GM23248 (cell line): ENCODE measurements at regions of chr3 and their contacts with region 1.

Region 1: GRCh38 chr3:14921078-14921616 is 26.2 kb upstream of the NR2C2 start:
- DNase-seq: peak; percentile 93
- H3K4me3 ChIP-seq: no peak overlapping the region
- H3K27ac ChIP-seq: no peak overlapping the region
- H3K4me1 ChIP-seq: peaks cover 3% of the 10 kb centered on the region; the same call in 1 of the 2 replicates
- H3K27me3 ChIP-seq: peaks cover 12% of the 10 kb centered on the region; the same call in 1 of the 2 replicates

Region 2: DNA sequence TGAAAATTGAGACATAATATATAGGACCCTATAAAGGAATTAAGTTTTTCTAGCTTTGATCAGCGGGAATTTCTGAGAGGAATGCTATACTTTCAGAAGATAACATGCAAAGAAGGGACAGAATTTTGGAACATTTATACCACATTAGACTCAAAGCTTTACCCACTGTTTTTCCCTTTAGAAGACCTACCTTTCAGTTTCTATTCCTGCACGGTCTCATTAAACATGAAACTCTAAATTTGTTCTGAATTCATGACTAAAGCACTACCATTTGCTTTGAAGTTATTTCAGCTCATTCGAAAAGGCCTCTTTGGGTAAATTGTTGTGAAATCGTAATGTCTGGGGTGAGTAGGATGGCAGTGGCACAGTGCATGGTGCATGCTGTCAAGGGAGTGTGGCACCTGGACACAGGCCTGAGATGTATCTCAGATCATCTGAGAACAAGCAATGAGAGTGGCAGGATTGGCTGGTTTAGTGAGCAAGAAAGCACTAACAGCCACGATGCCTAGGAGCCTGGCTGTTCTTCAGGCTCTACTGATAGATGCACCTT is 839.0 kb before region 1 on chr3:
- in situ Hi-C with region 1: no loop called
- DNase-seq: no peak
- H3K4me3 ChIP-seq: no peak overlapping the region
- H3K27ac ChIP-seq: no peak overlapping the region
- H3K4me1 ChIP-seq: no peaks in the 10 kb centered on the region
- H3K27me3 ChIP-seq: no peaks in the 10 kb centered on the region

Region 3: GRCh38 chr3:14452679-14453367 is 468.3 kb before region 1 on chr3:
- in situ Hi-C with region 1: no loop called
- DNase-seq: peak; percentile 96
- H3K4me3 ChIP-seq: peak overlapping the region; percentile 46
- H3K27ac ChIP-seq: peak overlapping the region; percentile 98
- H3K4me1 ChIP-seq: peaks cover 18% of the 10 kb centered on the region
- H3K27me3 ChIP-seq: no peaks in the 10 kb centered on the region

Region 4: DNA sequence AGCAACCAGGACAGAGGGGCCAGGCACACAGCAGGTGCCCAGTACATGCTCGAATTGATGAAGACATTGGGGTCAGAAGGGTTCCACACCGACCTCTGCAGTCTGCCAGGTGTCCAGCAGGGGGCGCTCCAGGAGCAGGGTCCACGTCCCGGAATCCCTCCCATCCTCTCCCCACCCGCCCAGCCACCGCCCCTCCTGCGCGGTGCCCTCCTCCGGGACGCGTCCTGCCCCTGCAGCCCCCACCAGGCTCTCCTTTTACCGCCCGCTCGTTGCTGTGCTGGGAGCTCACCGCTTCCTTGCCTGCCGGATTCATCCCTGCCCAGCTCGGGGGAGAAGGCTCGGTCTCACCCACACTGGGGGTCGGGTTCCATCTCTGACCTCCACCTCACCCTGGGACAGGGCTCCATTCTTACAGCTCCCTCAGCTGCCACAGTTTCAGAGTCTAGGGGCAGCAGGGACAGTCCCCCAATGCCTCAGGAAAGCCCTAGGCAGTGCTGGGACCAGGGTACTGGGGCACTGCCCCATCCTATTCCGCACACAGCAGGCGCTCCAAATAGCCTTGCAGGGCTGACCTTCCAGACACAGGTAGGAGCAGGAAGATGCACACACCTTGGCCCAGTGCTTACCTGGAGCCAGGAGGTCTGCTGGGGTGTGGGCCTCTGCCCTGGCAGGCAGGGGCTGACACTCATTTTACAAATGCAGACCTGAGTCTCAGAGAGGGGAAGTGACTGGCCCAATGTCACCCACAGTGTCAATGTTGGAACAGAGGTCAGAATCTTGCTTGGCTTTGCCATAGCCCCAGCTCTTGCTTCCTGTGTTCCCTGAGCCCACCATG is 412.0 kb before region 1 on chr3:
- in situ Hi-C with region 1: loop called (anchors 25 kb)
- DNase-seq: peak; percentile 37
- H3K4me3 ChIP-seq: no peak overlapping the region
- H3K27ac ChIP-seq: no peak overlapping the region
- H3K4me1 ChIP-seq: no peaks in the 10 kb centered on the region
- H3K27me3 ChIP-seq: no peaks in the 10 kb centered on the region

Region 5: GRCh38 chr3:14672588-14672987 is 248.6 kb before region 1 on chr3:
- in situ Hi-C with region 1: loop called (anchors 5 kb)
- DNase-seq: no peak
- H3K4me3 ChIP-seq: no peak overlapping the region
- H3K27ac ChIP-seq: no peak overlapping the region
- H3K4me1 ChIP-seq: no peaks in the 10 kb centered on the region
- H3K27me3 ChIP-seq: no peaks in the 10 kb centered on the region

Region 6: DNA sequence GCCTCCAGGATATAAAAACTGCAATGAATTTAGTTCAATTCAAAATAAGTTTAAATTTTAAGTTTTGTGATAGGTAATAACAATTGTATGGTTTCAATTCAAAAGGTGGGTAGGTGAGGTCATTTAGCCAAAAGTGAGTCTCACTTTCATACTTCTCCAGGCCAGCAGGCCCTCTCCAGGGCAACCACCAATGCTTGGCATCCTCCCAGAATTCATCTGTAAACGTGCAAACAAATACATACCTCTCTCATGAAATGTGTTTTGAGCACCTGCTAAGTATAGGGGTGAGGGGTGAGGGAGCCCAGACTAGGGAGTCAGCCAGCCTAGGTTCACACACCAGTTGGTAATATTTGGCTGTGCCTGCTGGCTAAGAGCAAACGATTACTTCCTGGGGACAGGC is 199.8 kb after region 1 on chr3:
- in situ Hi-C with region 1: no loop called
- DNase-seq: no peak
- H3K4me3 ChIP-seq: no peak overlapping the region
- H3K27ac ChIP-seq: no peak overlapping the region
- H3K4me1 ChIP-seq: no peaks in the 10 kb centered on the region
- H3K27me3 ChIP-seq: no peaks in the 10 kb centered on the region

Region 7: GRCh38 chr3:15591242-15591641 is 670.1 kb after region 1 on chr3:
- in situ Hi-C with region 1: no loop called
- DNase-seq: no peak
- H3K4me3 ChIP-seq: no peak overlapping the region
- H3K27ac ChIP-seq: no peak overlapping the region
- H3K4me1 ChIP-seq: no peaks in the 10 kb centered on the region
- H3K27me3 ChIP-seq: no peaks in the 10 kb centered on the region